ENCODE measurements at regions of chr1 and their contacts with region 1.

Region 1: GRCh38 chr1:18121072-18121820 is 13.6 kb downstream of the IGSF21 start:
- DNase-seq: no peak
- H3K4me3 ChIP-seq: no peak overlapping the region
- H3K27ac ChIP-seq: no peak overlapping the region
- H3K4me1 ChIP-seq: peaks cover 0 to 6% (median 2%) of the 10 kb centered on the region in 4 experiments; a peak in 4 of 7 replicates
- H3K27me3 ChIP-seq: no peaks in the 10 kb centered on the region
- CTCF ChIP-seq: no peak
- EP300 ChIP-seq: no peak
- POLR2A ChIP-seq: no peak
- RAD21 ChIP-seq: no peak

Region 2: GRCh38 chr1:17998889-17999288 is 122.4 kb before region 1 on chr1:
- CTCF ChIA-PET with region 1: no interaction called
- POLR2A ChIA-PET with region 1: no interaction called
- DNase-seq: no peak
- H3K4me3 ChIP-seq: no peak overlapping the region
- H3K27ac ChIP-seq: no peak overlapping the region
- H3K4me1 ChIP-seq: no peaks in the 10 kb centered on the region; a peak in 2 of 7 replicates
- H3K27me3 ChIP-seq: peaks cover 0 to 3% (median 1%) of the 10 kb centered on the region in 4 experiments; a peak in 1 of 7 replicates
- CTCF ChIP-seq: peak in 2 of 3 experiments; percentile 25 to 43; a peak in 2 of 4 replicates
- EP300 ChIP-seq: no peak
- POLR2A ChIP-seq: no peak
- RAD21 ChIP-seq: peak in 1 of 2 experiments; percentile 14; a peak in 1 of 4 replicates

Region 3: GRCh38 chr1:18109756-18110597 is 11.3 kb before region 1 on chr1:
- CTCF ChIA-PET with region 1: interaction called, 18 read pairs
- POLR2A ChIA-PET with region 1: interaction called, 5 read pairs
- DNase-seq: peak; percentile 50 to 96
- H3K4me3 ChIP-seq: peak overlapping the region; percentile 63 to 82 (median 71)
- H3K27ac ChIP-seq: no peak overlapping the region
- H3K4me1 ChIP-seq: peaks cover 16 to 29% (median 20%) of the 10 kb centered on the region in 4 experiments
- H3K27me3 ChIP-seq: peaks cover 8 to 50% (median 42%) of the 10 kb centered on the region in 4 experiments; a peak in 6 of 7 replicates
- CTCF ChIP-seq: peak; percentile 69 to 90 (median 89)
- EP300 ChIP-seq: no peak
- POLR2A ChIP-seq: no peak
- RAD21 ChIP-seq: peak; percentile 47 to 61

Region 4: GRCh38 chr1:18132034-18132710 is 10.9 kb after region 1 on chr1:
- CTCF ChIA-PET with region 1: interaction called, 12 read pairs
- POLR2A ChIA-PET with region 1: no interaction called
- DNase-seq: no peak
- H3K4me3 ChIP-seq: no peak overlapping the region
- H3K27ac ChIP-seq: no peak overlapping the region
- H3K4me1 ChIP-seq: peaks cover 2 to 14% (median 7%) of the 10 kb centered on the region in 4 experiments; a peak in 5 of 7 replicates
- H3K27me3 ChIP-seq: no peaks in the 10 kb centered on the region
- CTCF ChIP-seq: no peak
- EP300 ChIP-seq: no peak
- POLR2A ChIP-seq: no peak
- RAD21 ChIP-seq: no peak

Region 5: DNA sequence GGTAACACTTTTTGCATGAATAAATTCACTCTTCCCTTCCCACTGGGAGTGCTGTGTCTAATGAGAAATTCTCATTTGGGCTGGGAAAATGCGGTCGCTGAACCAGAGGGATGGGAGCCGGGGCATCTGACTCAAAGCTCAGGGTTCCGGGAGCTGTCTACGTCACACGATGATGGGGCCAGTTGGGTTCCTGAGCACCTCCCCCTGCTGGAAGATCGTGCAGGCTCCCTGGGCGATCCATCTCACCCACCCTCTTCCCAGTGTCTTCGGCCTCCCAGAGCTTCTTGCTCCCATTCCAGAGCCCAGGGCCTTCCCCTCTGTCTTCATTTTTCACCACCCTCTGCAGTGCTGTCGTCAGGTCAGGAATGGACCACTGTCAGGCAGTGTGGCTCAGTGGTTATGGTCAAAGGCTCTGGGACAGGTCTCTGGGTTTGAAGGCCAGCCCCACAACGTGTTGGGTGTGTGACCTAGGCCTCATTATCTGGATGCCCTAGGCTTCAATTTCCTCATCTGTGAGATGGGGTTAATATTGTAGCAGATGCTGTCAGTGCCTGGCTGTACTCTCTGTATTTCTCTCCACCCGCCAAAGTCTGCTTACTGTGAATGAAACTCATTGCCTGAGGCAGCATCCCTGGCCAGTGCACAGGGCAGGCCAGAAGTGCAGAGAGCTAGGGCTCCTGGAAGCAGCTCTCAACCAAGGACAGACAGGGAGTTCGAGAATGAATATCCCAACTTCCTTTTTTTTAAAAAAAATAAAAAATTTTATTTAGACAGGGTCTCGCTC is 18.1 kb after region 1 on chr1:
- CTCF ChIA-PET with region 1: interaction called, 12 read pairs
- POLR2A ChIA-PET with region 1: interaction called, 3 read pairs
- DNase-seq: no peak
- H3K4me3 ChIP-seq: no peak overlapping the region
- H3K27ac ChIP-seq: no peak overlapping the region
- H3K4me1 ChIP-seq: peaks cover 0 to 3% (median 0%) of the 10 kb centered on the region in 4 experiments; a peak in 2 of 7 replicates
- H3K27me3 ChIP-seq: no peaks in the 10 kb centered on the region
- CTCF ChIP-seq: peak in 2 of 3 experiments; percentile 12 to 15; a peak in 2 of 4 replicates
- EP300 ChIP-seq: no peak
- POLR2A ChIP-seq: no peak
- RAD21 ChIP-seq: no peak; a peak in 1 of 4 replicates

Region 6: GRCh38 chr1:18191481-18192155 is 70.4 kb after region 1 on chr1:
- CTCF ChIA-PET with region 1: no interaction called
- POLR2A ChIA-PET with region 1: no interaction called
- DNase-seq: no peak
- H3K4me3 ChIP-seq: no peak overlapping the region
- H3K27ac ChIP-seq: no peak overlapping the region
- H3K4me1 ChIP-seq: peaks cover 0 to 8% (median 2%) of the 10 kb centered on the region in 4 experiments; a peak in 5 of 7 replicates
- H3K27me3 ChIP-seq: no peaks in the 10 kb centered on the region
- CTCF ChIP-seq: no peak
- EP300 ChIP-seq: no peak
- POLR2A ChIP-seq: no peak
- RAD21 ChIP-seq: no peak

Measured in H1 (cell line).